CD4-positive, alpha-beta T cell (primary cell): ENCODE measurements at regions of chr16 and their contacts with region 1.

Region 1: DNA sequence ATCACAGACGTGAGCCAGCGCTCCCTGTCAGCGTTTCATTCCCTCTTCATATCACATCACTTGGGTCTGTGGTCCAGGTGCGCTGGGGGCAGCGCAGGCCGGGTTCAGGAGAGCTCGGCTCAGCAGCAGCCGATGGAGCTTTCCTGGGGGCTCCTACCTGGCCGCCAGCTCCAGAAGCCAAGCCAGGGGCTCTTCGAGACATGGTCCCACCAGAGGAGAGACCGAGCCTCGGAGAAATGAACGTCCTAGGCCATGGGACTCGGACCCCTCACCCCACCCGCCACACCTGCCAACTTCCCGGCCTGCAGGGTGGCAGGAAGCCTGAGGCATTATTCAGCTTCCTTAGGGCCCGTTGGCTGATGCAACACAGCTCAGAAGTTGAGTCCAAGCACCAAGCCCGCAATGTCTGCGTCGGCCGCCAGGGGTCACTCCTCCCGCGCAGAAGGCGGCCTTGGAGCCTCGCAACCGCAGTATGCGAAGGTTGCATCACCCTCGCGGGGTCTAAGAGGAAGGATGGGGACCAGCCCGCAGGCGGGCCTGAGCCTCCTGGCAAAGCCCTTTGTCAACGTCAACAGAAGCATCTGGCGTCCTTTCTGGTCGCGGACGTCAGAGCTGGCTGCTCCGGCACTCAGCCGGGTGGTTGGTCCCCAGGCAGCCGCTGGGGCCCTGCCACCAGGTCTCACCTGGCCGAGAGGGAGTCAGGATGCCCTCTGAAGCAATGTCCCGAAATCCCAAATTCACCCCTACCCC is 13.2 kb upstream of the KLHDC4 start:
- DNase-seq: peak; percentile 87 to 96 (median 91)
- ATAC-seq: peak; percentile 82
- H3K4me3 ChIP-seq: no peak overlapping the region
- H3K4me3 Mint-ChIP-seq: peak overlapping the region; percentile 66
- H3K27ac ChIP-seq: no peak overlapping the region
- H3K27ac Mint-ChIP-seq: peak overlapping the region; percentile 87
- H3K4me1 ChIP-seq: peaks cover 43% of the 10 kb centered on the region
- H3K4me1 Mint-ChIP-seq: peaks cover 38% of the 10 kb centered on the region
- H3K27me3 ChIP-seq: no peaks in the 10 kb centered on the region
- H3K27me3 Mint-ChIP-seq: no peaks in the 10 kb centered on the region
- CTCF ChIP-seq: peak; percentile 93

Region 2: DNA sequence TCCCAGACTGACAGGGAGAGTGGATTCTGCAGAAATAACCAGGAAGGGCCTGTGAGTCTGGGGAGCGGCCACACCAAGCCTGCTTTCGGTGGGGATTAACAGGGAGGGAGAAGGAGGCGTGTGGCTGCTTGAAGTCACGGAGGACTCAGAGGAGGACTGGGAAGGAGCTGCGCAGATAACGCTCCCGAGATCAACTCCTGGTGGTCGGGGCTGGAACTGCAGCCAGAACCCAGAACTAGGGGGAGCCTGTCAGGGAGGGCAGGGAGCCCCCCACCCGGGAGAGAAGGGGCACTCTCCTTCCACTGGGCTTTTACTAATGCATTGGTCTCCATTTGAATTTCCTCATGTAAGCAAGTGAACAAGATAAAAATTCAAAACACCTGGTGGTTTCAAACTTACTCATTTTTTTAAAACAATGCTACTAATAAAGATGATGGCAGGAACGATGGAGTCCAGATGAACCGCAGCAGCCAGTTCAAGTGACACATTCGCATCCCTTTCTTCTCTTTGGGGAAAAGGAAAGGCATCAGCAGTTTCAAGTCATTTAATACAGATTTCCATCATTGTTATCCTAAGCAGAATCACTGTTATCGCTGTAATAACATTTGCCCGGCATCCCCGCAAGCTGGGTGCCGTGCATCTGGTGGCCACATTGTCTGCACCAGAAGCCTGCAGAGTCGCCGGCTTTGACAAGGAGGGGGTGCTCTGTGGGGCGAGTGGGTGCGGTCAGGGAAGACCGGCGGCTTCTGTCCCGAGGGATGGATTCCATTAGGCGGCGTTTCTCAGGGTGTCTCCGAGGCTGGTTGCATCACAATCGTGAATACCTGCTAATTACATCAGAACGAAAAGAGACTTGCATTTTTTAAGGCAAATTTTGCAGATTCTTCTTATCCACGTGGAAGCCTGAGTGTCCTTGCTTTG is 1017.6 kb before region 1 on chr16:
- CTCF ChIA-PET with region 1: no interaction called
- POLR2A ChIA-PET with region 1: no interaction called
- intact Hi-C with region 1: no loop called
- DNase-seq: peak; percentile 4 to 52 (median 14)
- ATAC-seq: no peak
- H3K4me3 ChIP-seq: no peak overlapping the region
- H3K4me3 Mint-ChIP-seq: no peak overlapping the region
- H3K27ac ChIP-seq: no peak overlapping the region
- H3K27ac Mint-ChIP-seq: no peak overlapping the region
- H3K4me1 ChIP-seq: no peaks in the 10 kb centered on the region
- H3K4me1 Mint-ChIP-seq: no peaks in the 10 kb centered on the region
- H3K27me3 ChIP-seq: peaks cover 7 to 12% of the 10 kb centered on the region in 2 experiments
- H3K27me3 Mint-ChIP-seq: peaks cover 52% of the 10 kb centered on the region
- CTCF ChIP-seq: peak; percentile 65

Region 3: DNA sequence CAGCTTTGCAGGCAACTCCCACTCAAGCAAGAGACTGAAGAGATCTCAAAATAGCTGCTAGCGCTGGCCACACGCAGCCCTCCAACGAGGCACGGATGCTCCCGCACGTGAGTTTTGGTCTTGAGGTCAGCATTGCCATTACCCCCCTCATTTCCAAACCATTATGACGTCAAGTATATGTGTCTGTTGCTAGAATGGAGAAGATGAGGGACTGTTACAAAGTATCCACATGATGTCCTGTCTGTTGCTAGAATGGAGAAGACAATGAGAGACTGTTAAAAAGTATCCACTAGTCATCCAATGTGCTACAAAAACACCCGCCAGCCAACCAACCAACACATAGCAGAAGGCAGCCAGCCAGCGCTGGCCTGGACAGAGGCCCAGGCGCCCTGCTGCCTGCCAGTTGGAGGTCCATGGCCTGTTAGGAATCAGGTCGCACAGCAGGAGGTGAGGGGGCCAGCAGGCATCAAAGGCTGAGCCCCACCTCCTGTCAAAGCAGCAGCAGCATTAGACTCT is 38.0 kb before region 1 on chr16:
- CTCF ChIA-PET with region 1: no interaction called
- POLR2A ChIA-PET with region 1: no interaction called
- intact Hi-C with region 1: no loop called
- DNase-seq: no peak
- ATAC-seq: no peak
- H3K4me3 ChIP-seq: no peak overlapping the region
- H3K4me3 Mint-ChIP-seq: no peak overlapping the region
- H3K27ac ChIP-seq: no peak overlapping the region
- H3K27ac Mint-ChIP-seq: no peak overlapping the region
- H3K4me1 ChIP-seq: no peaks in the 10 kb centered on the region
- H3K4me1 Mint-ChIP-seq: no peaks in the 10 kb centered on the region
- H3K27me3 ChIP-seq: no peaks in the 10 kb centered on the region
- H3K27me3 Mint-ChIP-seq: no peaks in the 10 kb centered on the region
- CTCF ChIP-seq: no peak

Region 4: GRCh38 chr16:87806603-87807546 is 27.9 kb after region 1 on chr16:
- CTCF ChIA-PET with region 1: interaction called, 10 read pairs
- POLR2A ChIA-PET with region 1: interaction called, 6 read pairs
- intact Hi-C with region 1: no loop called
- DNase-seq: peak; percentile 23 to 76 (median 48)
- ATAC-seq: peak; percentile 95
- H3K4me3 ChIP-seq: peak overlapping the region; percentile 47
- H3K4me3 Mint-ChIP-seq: peak overlapping the region; percentile 89
- H3K27ac ChIP-seq: no peak overlapping the region
- H3K27ac Mint-ChIP-seq: peak overlapping the region; percentile 77
- H3K4me1 ChIP-seq: peaks cover 18% of the 10 kb centered on the region
- H3K4me1 Mint-ChIP-seq: peaks cover 18% of the 10 kb centered on the region
- H3K27me3 ChIP-seq: no peaks in the 10 kb centered on the region
- H3K27me3 Mint-ChIP-seq: no peaks in the 10 kb centered on the region
- CTCF ChIP-seq: no peak

Region 5: DNA sequence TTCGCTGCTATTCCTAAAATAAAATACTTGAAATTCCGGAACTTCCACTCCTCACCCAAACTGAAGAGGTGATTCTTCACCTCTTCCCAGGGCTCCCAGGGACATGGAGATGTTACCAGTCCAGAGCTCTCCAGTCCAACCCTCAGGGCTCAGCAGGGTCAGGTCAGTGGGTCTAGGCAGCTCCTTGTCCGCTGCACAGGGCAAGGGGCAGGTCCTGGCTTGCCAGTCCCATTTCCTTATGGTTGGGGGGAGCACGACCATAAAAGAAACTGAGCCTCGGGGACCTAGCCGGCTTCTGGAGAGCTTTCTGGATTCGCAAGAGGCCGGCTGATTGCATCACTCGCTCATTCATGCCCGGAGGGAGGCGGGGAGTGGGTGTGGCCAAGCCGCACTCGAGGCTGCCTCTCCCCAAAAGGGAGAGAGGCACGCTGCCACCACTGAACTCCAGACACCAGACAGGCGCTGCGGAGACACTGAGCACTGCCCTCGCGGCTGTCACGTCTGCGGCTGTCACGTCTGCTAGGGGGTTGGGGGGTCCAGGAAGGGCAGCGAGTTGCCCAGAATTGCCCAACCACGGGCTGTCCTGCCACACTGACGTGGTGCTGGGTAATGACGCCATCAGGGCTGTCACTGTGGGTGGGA is 74.5 kb after region 1 on chr16:
- CTCF ChIA-PET with region 1: interaction called, 45 read pairs
- POLR2A ChIA-PET with region 1: interaction called, 3 read pairs
- intact Hi-C with region 1: loop called (anchors 1 kb)
- DNase-seq: peak; percentile 55 to 96 (median 84)
- ATAC-seq: peak; percentile 73
- H3K4me3 ChIP-seq: peak overlapping the region; percentile 35
- H3K4me3 Mint-ChIP-seq: peak overlapping the region; percentile 72
- H3K27ac ChIP-seq: no peak overlapping the region
- H3K27ac Mint-ChIP-seq: peak overlapping the region; percentile 86
- H3K4me1 ChIP-seq: peaks cover 61% of the 10 kb centered on the region
- H3K4me1 Mint-ChIP-seq: peaks cover 21% of the 10 kb centered on the region
- H3K27me3 ChIP-seq: no peaks in the 10 kb centered on the region
- H3K27me3 Mint-ChIP-seq: no peaks in the 10 kb centered on the region
- CTCF ChIP-seq: no peak

Region 6: DNA sequence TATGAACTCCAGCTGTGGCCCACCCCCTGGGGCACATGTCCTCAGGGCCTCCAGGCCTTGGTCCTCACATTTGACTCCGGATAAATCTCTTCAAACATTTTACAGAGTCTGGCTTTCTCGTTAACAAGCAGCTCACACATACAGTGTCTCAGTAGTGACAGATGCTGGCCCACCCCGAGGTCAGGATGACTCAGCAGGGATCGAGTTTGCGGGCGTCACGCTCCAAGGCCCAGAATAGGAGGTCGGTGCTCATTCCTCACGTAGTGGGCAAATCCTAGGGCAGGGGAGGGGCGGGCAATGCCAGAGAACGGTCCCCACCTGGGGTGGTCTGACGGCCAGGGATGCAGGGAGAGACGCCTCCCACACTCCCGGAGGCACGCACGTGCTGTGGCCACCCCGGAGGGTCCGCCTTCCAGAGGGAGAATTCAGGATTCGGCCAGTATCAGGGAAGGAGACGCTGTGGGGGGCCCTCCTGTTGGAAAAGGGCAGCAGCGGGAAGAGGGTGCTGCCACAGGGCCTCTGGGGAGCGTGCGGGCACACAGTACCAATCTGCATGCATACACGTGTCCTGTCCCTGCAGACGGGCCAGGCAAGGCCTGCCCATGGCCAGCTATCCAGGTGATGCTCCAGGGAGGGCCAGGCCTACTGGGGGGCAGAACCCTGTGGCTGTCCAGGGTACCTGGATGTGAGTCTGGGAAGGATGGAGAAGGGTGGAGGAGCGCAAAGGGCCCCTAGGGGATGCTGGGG is 81.7 kb after region 1 on chr16:
- CTCF ChIA-PET with region 1: interaction called, 10 read pairs
- POLR2A ChIA-PET with region 1: no interaction called
- intact Hi-C with region 1: no loop called
- DNase-seq: peak in 1 of 14 experiments; percentile 32
- ATAC-seq: peak; percentile 14
- H3K4me3 ChIP-seq: no peak overlapping the region
- H3K4me3 Mint-ChIP-seq: peak overlapping the region; percentile 56
- H3K27ac ChIP-seq: no peak overlapping the region
- H3K27ac Mint-ChIP-seq: peak overlapping the region; percentile 71
- H3K4me1 ChIP-seq: peaks cover 50% of the 10 kb centered on the region
- H3K4me1 Mint-ChIP-seq: peaks cover 22% of the 10 kb centered on the region
- H3K27me3 ChIP-seq: no peaks in the 10 kb centered on the region
- H3K27me3 Mint-ChIP-seq: no peaks in the 10 kb centered on the region
- CTCF ChIP-seq: no peak

Region 7: GRCh38 chr16:87877938-87878507 is 99.0 kb after region 1 on chr16:
- CTCF ChIA-PET with region 1: interaction called, 35 read pairs
- POLR2A ChIA-PET with region 1: no interaction called
- intact Hi-C with region 1: no loop called
- DNase-seq: peak in 3 of 14 experiments; percentile 30 to 38 (median 30)
- ATAC-seq: no peak
- H3K4me3 ChIP-seq: no peak overlapping the region
- H3K4me3 Mint-ChIP-seq: no peak overlapping the region
- H3K27ac ChIP-seq: no peak overlapping the region
- H3K27ac Mint-ChIP-seq: no peak overlapping the region
- H3K4me1 ChIP-seq: peaks cover 11% of the 10 kb centered on the region
- H3K4me1 Mint-ChIP-seq: peaks cover 11% of the 10 kb centered on the region
- H3K27me3 ChIP-seq: no peaks in the 10 kb centered on the region
- H3K27me3 Mint-ChIP-seq: no peaks in the 10 kb centered on the region
- CTCF ChIP-seq: no peak

Region 8: DNA sequence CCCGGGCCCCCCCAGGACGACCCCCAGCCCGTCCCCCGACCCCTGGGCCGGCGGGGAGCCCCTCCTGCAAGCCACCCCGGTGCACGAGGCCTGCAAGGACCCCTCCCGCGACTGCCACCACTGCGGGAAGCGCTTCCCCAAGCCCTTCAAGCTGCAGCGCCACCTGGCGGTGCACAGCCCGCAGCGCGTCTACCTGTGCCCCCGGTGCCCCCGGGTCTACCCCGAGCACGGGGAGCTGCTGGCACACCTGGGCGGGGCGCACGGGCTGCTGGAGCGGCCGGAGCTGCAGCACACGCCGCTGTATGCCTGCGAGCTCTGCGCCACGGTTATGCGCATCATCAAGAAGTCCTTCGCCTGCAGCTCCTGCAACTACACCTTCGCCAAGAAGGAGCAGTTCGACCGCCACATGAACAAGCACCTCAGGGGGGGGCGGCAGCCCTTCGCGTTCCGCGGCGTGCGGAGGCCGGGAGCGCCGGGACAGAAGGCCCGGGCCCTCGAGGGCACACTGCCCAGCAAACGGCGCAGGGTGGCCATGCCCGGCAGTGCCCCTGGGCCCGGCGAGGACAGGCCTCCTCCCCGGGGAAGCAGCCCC is 658.5 kb after region 1 on chr16:
- CTCF ChIA-PET with region 1: interaction called, 3 read pairs
- POLR2A ChIA-PET with region 1: no interaction called
- intact Hi-C with region 1: loop called (anchors 5 kb)
- DNase-seq: peak; percentile 49 to 80 (median 58)
- ATAC-seq: peak; percentile 76
- H3K4me3 ChIP-seq: no peak overlapping the region
- H3K4me3 Mint-ChIP-seq: no peak overlapping the region
- H3K27ac ChIP-seq: no peak overlapping the region
- H3K27ac Mint-ChIP-seq: no peak overlapping the region
- H3K4me1 ChIP-seq: peaks cover 3% of the 10 kb centered on the region
- H3K4me1 Mint-ChIP-seq: no peaks in the 10 kb centered on the region
- H3K27me3 ChIP-seq: no peaks in the 10 kb centered on the region
- H3K27me3 Mint-ChIP-seq: no peaks in the 10 kb centered on the region
- CTCF ChIP-seq: peak; percentile 71